Testis (tissue), 5 donors: ENCODE measurements at regions of chr17 and their contacts with region 1.

Region 1: GRCh38 chr17:50956750-50957523 is 90.8 kb upstream of the TOB1 start:
- DNase-seq: peak; percentile 69
- H3K4me3 ChIP-seq: no peak overlapping the region
- H3K27ac ChIP-seq: peak overlapping the region in 1 of 2 donors; percentile 74
- H3K4me1 ChIP-seq: peaks cover 19% of the 10 kb centered on the region
- H3K27me3 ChIP-seq: no peaks in the 10 kb centered on the region
- CTCF ChIP-seq: peak in 2 of 3 experiments; percentile 63
- POLR2A ChIP-seq: no peak

Region 2: DNA sequence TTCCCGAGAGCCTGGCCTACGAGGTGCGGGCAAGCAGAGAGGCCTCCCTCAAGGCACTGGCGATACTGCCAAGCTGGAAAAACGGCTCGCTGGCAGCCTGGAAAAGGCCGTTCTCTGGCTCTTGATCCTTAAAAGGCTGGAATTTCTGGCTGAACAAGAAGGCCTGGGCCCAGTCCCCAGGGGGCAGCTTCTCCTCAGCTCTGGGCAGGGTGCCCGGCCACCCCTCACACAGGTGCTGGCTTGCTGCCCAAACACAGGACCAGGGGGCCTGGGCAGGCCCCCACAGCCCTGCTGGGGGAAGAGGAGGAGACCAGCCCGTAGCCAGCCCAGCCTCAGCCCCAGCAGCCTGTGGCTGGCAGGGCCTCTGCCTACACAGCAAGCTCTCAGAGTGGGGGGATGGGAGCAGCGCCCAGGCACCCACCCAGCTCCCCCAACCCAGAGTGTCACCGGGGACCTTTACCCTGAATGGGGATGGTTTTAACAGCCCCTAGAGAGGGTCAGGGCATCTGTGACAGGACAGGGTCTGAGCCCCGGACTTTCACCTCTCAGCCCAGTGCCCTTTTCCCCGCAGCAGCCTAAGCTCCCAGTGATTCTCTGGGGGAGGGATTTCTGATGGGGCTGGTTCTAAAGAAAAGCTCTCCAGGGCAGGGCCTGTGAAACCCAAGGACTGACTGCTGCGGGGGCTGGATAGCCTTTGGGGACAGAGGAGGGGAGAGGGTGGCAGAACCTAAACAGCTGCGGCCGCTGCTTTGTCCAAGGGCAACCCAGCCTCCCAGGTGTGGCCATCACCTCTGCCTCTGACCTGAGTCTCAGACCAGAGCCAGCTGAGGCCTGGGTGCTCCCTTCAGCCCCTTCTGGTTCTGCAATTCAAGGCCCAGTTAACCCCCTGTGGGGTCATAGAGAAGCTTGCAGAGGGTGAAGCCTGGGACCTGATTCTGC is 52.1 kb before region 1 on chr17:
- intact Hi-C with region 1: loop called (anchors 5 kb)
- DNase-seq: peak; percentile 50
- H3K4me3 ChIP-seq: no peak overlapping the region
- H3K27ac ChIP-seq: peak overlapping the region; percentile 8 to 89
- H3K4me1 ChIP-seq: peaks cover 36% of the 10 kb centered on the region
- H3K27me3 ChIP-seq: no peaks in the 10 kb centered on the region
- CTCF ChIP-seq: no peak
- POLR2A ChIP-seq: no peak

Region 3: DNA sequence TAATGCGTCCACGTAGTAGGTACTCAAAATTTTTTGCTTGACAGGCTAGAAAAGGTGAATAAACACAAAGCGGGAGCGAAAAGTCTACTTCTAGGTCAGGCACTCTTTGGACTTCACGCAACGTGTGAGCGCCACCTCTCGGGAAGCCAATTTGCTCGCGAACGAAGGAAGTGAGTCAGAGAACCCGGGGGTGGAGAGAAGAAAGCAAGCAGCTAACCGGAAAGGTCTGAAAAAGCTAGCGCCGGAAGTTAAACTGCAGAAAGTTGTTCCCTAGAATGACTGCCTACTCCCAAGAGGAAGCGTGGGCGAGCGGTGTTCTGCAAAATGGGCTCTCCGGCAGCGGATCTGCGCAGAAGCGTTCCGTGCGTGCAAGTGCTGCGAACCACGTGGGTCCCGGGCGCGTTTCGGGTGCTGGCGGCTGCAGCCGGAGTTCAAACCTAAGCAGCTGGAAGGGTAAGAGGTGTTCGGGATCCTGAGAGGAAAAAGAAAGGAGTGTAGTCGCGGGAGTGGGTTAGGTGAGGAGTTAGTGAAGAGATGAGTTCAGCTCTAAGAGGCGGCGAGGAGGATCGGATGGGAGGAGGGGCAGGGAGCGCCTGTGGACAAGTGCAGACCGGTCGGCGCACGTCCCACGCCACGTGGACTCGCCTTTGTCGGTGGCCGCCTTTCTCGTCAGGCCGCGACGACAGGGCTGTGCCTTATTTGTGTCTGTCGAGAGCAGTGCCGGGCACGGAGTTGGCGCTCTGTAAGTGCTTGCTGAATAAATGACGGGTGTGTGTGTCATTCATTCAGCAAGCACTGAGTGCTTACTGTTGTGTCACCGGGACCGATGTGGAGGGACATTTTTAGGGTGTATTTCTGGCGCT is 196.5 kb after region 1 on chr17 and contains the start of gene NME1:
- intact Hi-C with region 1: no loop called
- DNase-seq: peak; percentile 98
- H3K4me3 ChIP-seq: peak within 1 kb of the TSS; percentile 63 to 78
- H3K27ac ChIP-seq: peak within 1 kb of the TSS; percentile 76 to 88
- H3K4me1 ChIP-seq: peaks cover 4% of the 10 kb centered on the region
- H3K27me3 ChIP-seq: no peaks in the 10 kb centered on the region
- CTCF ChIP-seq: peak; percentile 60 to 75 (median 65)
- POLR2A ChIP-seq: no peak
- total RNA-seq, gene NME1: 37.3 to 53.7 TPM